BJ (cell line): ENCODE measurements at regions of chr19 and their contacts with region 1.

Region 1: DNA sequence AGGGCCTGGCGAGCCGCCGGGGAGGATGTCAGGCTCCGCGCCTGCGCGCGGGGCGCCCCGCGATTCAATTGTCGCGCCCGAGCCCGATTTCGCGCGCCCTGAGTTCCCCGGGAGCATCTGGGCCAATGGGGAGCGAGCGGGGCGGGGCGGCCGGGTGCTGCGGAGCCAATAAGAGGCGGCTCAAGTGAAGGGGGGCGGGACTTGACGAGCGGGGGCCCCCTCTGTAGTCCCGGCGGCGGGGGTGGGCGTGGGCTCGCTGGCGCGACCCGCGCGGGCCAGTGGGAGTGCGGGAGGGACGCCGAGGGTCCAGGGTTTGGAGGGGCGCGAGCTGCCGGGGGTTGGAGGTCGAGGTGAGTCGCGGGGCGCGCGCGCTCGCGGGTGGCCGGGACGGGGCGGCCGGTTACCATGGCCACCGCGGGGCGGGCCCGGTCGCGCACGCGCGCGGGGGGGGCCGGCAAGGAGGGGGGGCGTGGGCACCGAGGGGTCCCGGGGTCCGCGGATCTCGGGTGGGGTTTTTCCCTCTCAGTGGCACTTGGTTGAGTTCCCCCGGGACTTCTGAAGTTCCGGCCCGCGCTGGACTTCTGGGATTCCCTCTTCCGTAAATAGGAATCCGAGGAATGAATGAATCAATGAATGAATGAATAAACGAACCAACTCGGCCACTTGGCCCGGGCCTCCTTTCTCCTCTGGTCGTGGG is 744 bp downstream of the UHRF1 start:
- DNase-seq: no peak
- H3K4me3 ChIP-seq: peak overlapping the region; percentile 55
- H3K27me3 ChIP-seq: no peaks in the 10 kb centered on the region
- CTCF ChIP-seq: no peak

Region 2: GRCh38 chr19:4791170-4792018 is 118.7 kb before region 1 on chr19 and contains the start of gene FEM1A:
- CTCF ChIA-PET with region 1: interaction called, 13 read pairs
- POLR2A ChIA-PET with region 1: interaction called, 3 read pairs
- DNase-seq: peak; percentile 100
- H3K4me3 ChIP-seq: peak within 1 kb of the TSS; percentile 83
- H3K27me3 ChIP-seq: no peaks in the 10 kb centered on the region
- CTCF ChIP-seq: peak; percentile 99
- polyA plus RNA-seq, gene FEM1A: 3.8 and 5.6 TPM in 2 replicates

Region 3: DNA sequence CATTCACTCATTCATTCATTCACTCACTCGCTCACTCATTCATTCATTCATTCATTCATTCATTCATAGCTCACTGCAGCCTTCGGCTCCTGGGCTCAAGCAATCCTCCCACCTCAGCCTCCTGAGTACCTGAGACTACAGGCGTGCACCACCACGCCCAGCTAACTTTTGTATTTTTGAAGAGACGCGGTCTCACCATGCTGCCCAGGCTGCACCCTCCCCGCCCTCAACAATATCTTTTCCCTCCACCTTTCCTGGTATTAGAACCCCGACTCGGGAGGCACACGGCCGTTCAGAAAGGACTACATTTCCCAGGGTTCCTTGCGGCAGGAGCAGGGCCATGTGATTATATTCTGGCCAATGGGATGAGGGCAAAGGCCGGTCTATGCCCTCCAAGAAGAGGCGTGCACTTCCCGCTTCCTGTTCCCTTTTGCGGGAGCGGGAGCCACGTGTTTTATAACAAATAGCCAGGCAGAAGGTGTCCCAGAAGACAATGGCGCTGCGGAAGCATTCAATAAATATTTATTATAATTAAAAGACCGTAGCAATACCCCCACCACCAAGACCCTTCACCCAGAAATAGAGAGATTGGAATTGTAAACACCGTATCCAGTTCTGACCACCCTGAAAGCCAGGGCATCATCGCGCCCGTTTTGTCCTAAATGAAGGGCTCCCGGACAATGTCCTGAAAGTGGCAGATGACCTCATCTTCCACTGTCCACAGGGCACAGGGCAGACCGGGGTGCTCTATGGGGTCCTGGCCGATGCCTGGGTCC is 94.4 kb before region 1 on chr19:
- CTCF ChIA-PET with region 1: interaction called, 133 read pairs
- POLR2A ChIA-PET with region 1: interaction called, 10 read pairs
- DNase-seq: no peak
- H3K4me3 ChIP-seq: no peak overlapping the region
- H3K27me3 ChIP-seq: no peaks in the 10 kb centered on the region
- CTCF ChIP-seq: no peak

Region 4: GRCh38 chr19:4867534-4868285 is 42.3 kb before region 1 on chr19 and contains the start of gene PLIN3:
- CTCF ChIA-PET with region 1: interaction called, 58 read pairs
- POLR2A ChIA-PET with region 1: interaction called, 3 read pairs
- DNase-seq: peak; percentile 67
- H3K4me3 ChIP-seq: peak within 1 kb of the TSS; percentile 92
- H3K27me3 ChIP-seq: no peaks in the 10 kb centered on the region
- CTCF ChIP-seq: no peak
- polyA plus RNA-seq, gene PLIN3: 128 and 211 TPM in 2 replicates

Region 5: GRCh38 chr19:5031231-5032100 is 121.4 kb after region 1 on chr19:
- CTCF ChIA-PET with region 1: interaction called, 49 read pairs
- POLR2A ChIA-PET with region 1: interaction called, 5 read pairs
- DNase-seq: no peak
- H3K4me3 ChIP-seq: no peak overlapping the region
- H3K27me3 ChIP-seq: no peaks in the 10 kb centered on the region
- CTCF ChIP-seq: peak; percentile 96